Caco-2 (cell line): ENCODE measurements at regions of chr5 and their contacts with region 1.

Region 1: GRCh38 chr5:86880785-86881492 is 263.2 kb downstream of the COX7C start:
- DNase-seq: peak; percentile 74 to 77
- H3K4me3 ChIP-seq: no peak overlapping the region
- H3K4me3 Mint-ChIP-seq: no peak overlapping the region
- H3K27ac Mint-ChIP-seq: no peak overlapping the region
- H3K4me1 ChIP-seq: no peaks in the 10 kb centered on the region
- H3K4me1 Mint-ChIP-seq: no peaks in the 10 kb centered on the region
- H3K27me3 ChIP-seq: no peaks in the 10 kb centered on the region
- H3K27me3 Mint-ChIP-seq: peaks cover 4% of the 10 kb centered on the region
- CTCF ChIP-seq: peak; percentile 83 to 88

Region 2: GRCh38 chr5:86968301-86968753 is 87.4 kb after region 1 on chr5:
- CTCF ChIA-PET with region 1: interaction called, 22 read pairs
- POLR2A ChIA-PET with region 1: no interaction called
- intact Hi-C with region 1: loop called (anchors 1 kb)
- DNase-seq: no peak
- H3K4me3 ChIP-seq: no peak overlapping the region
- H3K4me3 Mint-ChIP-seq: no peak overlapping the region
- H3K27ac Mint-ChIP-seq: no peak overlapping the region
- H3K4me1 ChIP-seq: no peaks in the 10 kb centered on the region
- H3K4me1 Mint-ChIP-seq: no peaks in the 10 kb centered on the region
- H3K27me3 ChIP-seq: no peaks in the 10 kb centered on the region
- H3K27me3 Mint-ChIP-seq: peaks cover 11% of the 10 kb centered on the region
- CTCF ChIP-seq: peak in 1 of 2 experiments; percentile 27

Region 3: DNA sequence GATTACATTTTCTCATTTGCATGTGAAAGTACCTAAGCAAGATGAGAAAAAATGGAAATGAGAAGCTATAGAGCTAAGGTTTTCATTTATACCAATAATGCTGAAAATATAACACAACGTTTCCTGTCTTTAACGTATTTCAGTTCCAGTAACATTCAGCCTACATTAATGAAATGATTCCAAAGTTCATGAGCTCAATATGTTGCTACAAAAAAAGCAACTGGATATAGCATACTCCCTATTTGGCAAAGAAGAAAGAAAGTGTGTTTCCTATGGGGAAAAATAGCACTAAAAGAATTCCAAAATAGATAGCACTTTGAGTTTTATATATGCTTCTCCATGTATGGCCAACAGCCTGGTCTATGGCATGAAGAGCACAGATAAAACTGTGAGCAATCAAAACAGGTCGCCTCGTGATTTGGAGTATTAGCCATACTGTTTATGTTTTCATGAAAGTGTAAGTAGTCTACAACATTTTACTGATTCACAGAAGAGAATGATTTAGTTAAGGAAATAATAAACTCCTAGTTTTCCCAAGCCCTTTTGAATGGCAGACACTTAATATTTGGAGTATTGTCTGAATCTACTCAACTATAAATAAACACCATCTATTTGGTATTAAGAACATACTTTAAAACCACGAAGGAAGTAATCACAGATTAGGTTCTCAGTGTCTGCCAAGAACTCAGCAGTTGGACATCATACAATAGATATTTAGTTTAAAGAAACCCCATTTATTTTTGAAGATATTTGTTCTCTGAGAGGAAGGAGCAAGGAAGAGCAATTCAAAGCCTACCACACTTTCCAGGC is 128.0 kb after region 1 on chr5:
- CTCF ChIA-PET with region 1: interaction called, 3 read pairs
- POLR2A ChIA-PET with region 1: no interaction called
- intact Hi-C with region 1: loop called (anchors 1 kb)
- DNase-seq: no peak
- H3K4me3 ChIP-seq: no peak overlapping the region
- H3K4me3 Mint-ChIP-seq: no peak overlapping the region
- H3K27ac Mint-ChIP-seq: no peak overlapping the region
- H3K4me1 ChIP-seq: no peaks in the 10 kb centered on the region
- H3K4me1 Mint-ChIP-seq: no peaks in the 10 kb centered on the region
- H3K27me3 ChIP-seq: no peaks in the 10 kb centered on the region
- H3K27me3 Mint-ChIP-seq: peaks cover 14% of the 10 kb centered on the region
- CTCF ChIP-seq: no peak

Region 4: DNA sequence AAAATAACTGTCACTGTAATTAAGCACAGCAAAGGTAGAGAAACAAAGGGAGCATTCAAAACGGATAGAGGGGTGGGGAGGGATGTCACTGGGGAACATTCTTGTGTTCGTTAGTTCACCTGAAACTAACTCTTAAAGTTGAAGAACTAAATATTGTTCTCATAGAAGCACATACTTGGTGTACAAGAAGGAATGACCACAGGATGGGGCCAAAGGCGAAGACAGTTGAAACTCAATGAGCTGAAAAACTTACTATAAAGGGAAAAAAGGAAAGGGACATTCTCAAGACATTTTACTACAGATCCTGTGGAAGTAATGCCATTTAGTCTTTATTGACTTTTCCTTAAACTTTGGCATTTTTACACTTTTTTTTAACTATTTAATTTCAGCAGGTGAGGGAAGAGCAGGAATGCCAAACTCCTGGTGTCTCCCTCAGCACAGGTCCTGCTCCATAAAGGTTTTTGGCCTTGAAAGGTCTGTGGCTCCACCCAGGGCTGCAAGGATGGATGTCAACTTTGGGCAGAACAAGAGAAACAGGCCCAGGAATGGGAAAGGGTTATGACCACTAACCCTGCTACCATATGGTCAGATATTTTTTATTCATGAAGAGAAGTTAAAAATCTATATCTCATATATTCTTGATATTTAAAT is 189.2 kb after region 1 on chr5:
- CTCF ChIA-PET with region 1: no interaction called
- POLR2A ChIA-PET with region 1: no interaction called
- intact Hi-C with region 1: no loop called
- DNase-seq: peak in 1 of 2 experiments; percentile 22
- H3K4me3 ChIP-seq: no peak overlapping the region
- H3K4me3 Mint-ChIP-seq: no peak overlapping the region
- H3K27ac Mint-ChIP-seq: no peak overlapping the region
- H3K4me1 ChIP-seq: no peaks in the 10 kb centered on the region
- H3K4me1 Mint-ChIP-seq: no peaks in the 10 kb centered on the region
- H3K27me3 ChIP-seq: no peaks in the 10 kb centered on the region
- H3K27me3 Mint-ChIP-seq: peaks cover 2% of the 10 kb centered on the region
- CTCF ChIP-seq: peak; percentile 22 to 30

Region 5: GRCh38 chr5:87412630-87413342 is 531.8 kb after region 1 on chr5 and contains the start of gene CCNH:
- CTCF ChIA-PET with region 1: no interaction called
- POLR2A ChIA-PET with region 1: no interaction called
- intact Hi-C with region 1: loop called (anchors 2 kb)
- DNase-seq: peak; percentile 96 to 97
- H3K4me3 ChIP-seq: peak within 1 kb of the TSS; percentile 78
- H3K4me3 Mint-ChIP-seq: peak within 1 kb of the TSS; percentile 91
- H3K27ac Mint-ChIP-seq: peak within 1 kb of the TSS; percentile 93
- H3K4me1 ChIP-seq: 0 out of 2 replicates have a peak, but pooled peaks cover 5% of the 10 kb centered on the region
- H3K4me1 Mint-ChIP-seq: no peaks in the 10 kb centered on the region
- H3K27me3 ChIP-seq: no peaks in the 10 kb centered on the region
- H3K27me3 Mint-ChIP-seq: peaks cover 2% of the 10 kb centered on the region
- CTCF ChIP-seq: no peak
- total RNA-seq, gene CCNH: 39.4 and 39.6 TPM in 2 replicates

Region 6: GRCh38 chr5:87844447-87844846 is 963.5 kb after region 1 on chr5:
- CTCF ChIA-PET with region 1: no interaction called
- POLR2A ChIA-PET with region 1: no interaction called
- intact Hi-C with region 1: no loop called
- DNase-seq: no peak
- H3K4me3 ChIP-seq: no peak overlapping the region
- H3K4me3 Mint-ChIP-seq: no peak overlapping the region
- H3K27ac Mint-ChIP-seq: no peak overlapping the region
- H3K4me1 ChIP-seq: no peaks in the 10 kb centered on the region
- H3K4me1 Mint-ChIP-seq: no peaks in the 10 kb centered on the region
- H3K27me3 ChIP-seq: no peaks in the 10 kb centered on the region
- H3K27me3 Mint-ChIP-seq: peaks cover 2% of the 10 kb centered on the region
- CTCF ChIP-seq: no peak